ENCODE measurements at regions of chr7 and their contacts with region 1.

Region 1: GRCh38 chr7:80699721-80700256 is 61.3 kb downstream of the CD36 start:
- DNase-seq: no peak
- ATAC-seq: peak; percentile 48 to 74 (median 54)
- H3K4me3 ChIP-seq: no peak overlapping the region
- H3K27ac ChIP-seq: no peak overlapping the region
- H3K4me1 ChIP-seq: peaks cover 0 to 6% (median 0%) of the 10 kb centered on the region in 4 donors
- H3K27me3 ChIP-seq: no peaks in the 10 kb centered on the region
- CTCF ChIP-seq: no peak
- POLR2A ChIP-seq: no peak

Region 2: GRCh38 chr7:81029511-81029910 is 329.7 kb after region 1 on chr7:
- intact Hi-C with region 1: no loop called
- DNase-seq: no peak
- ATAC-seq: no peak
- H3K4me3 ChIP-seq: no peak overlapping the region
- H3K27ac ChIP-seq: no peak overlapping the region
- H3K4me1 ChIP-seq: no peaks in the 10 kb centered on the region
- H3K27me3 ChIP-seq: no peaks in the 10 kb centered on the region
- CTCF ChIP-seq: no peak
- POLR2A ChIP-seq: no peak

Region 3: DNA sequence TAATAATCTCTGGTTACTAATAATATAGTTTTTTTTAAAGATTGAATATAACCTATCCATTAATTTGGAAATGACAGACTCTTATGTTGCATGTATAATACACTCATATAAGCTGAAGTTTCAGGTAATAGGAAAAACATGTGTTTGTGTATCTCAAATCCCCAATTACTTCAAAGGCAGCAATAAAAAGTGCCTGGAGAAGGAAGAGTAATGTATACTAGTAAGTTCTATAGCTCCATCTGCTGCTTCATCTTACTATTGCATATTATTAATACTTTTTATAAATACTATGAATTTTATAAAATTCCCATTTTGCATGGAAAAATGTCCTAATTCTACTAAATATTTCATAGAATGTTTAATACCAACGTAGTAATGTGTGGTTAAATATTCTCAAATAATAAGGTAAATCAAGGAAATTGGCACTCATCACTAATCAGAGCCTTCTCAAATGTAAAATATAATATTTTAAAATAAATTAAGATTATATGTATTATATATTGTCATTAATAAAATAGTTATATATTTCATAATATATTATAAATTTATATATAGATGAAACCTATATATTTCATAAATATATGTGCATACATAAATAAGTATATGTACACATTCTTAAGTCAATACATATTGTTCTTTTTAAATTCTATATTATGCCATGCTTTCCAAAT is 758.2 kb after region 1 on chr7:
- intact Hi-C with region 1: loop called in 1 of 2 experiments (anchors 5 kb)
- DNase-seq: no peak
- ATAC-seq: no peak
- H3K4me3 ChIP-seq: no peak overlapping the region
- H3K27ac ChIP-seq: no peak overlapping the region
- H3K4me1 ChIP-seq: no peaks in the 10 kb centered on the region
- H3K27me3 ChIP-seq: no peaks in the 10 kb centered on the region
- CTCF ChIP-seq: peak in 3 of 4 donors; percentile 23 to 27 (median 26)
- POLR2A ChIP-seq: no peak